H1 (cell line): ENCODE measurements at regions of chr1 and their contacts with region 1.

Region 1: DNA sequence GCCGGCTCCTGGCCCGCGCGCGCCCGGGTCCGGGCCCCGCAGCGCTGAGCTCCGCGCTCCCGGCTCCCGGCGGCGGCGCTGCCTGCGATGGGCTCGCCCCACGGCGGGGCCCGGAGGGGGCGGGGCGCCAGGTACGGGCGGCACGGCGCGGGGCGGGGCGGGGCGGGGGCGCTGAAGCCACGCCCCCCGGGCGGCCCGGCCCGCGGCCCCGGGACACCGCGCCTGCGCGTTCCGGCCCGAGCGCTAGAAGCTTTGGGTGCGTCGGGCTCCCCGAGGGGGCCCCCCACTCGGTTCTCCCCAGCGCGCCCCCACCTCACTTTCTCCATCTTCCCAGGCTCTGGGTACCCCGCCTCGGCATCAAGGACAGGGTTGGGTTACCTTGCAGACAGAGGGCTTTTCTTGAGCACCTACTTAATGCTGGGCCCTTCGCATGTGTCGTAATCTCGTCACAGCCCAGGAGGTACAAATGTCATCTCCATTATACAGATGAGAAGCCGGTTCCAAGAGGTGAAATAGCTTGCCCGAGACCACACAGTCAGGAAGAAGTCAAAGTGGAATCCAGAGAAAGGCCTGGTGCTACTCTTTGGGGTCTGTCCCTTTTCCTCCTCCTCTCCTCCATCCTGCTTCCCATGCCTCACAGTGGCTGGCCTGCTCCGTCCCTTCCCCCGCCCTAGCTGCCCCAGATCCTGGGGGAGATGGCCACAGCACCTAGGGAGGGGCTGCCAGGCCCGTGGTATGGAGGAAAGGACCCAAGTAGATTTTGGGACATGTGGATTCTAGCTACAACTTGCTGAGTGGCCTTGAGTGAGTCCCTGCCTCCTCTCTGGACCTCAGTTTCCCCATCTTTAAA is 46.5 kb downstream of the RAP1GAP start:
- DNase-seq: peak in 1 of 2 experiments; percentile 81
- H3K4me3 ChIP-seq: peak overlapping the region; percentile 24 to 60 (median 32)
- H3K27ac ChIP-seq: no peak overlapping the region
- H3K4me1 ChIP-seq: peaks cover 0 to 23% (median 17%) of the 10 kb centered on the region in 4 experiments; a peak in 6 of 7 replicates
- H3K27me3 ChIP-seq: peaks cover 0 to 26% (median 13%) of the 10 kb centered on the region in 4 experiments; a peak in 5 of 7 replicates
- CTCF ChIP-seq: no peak
- EP300 ChIP-seq: no peak
- POLR2A ChIP-seq: no peak
- RAD21 ChIP-seq: no peak

Region 2: DNA sequence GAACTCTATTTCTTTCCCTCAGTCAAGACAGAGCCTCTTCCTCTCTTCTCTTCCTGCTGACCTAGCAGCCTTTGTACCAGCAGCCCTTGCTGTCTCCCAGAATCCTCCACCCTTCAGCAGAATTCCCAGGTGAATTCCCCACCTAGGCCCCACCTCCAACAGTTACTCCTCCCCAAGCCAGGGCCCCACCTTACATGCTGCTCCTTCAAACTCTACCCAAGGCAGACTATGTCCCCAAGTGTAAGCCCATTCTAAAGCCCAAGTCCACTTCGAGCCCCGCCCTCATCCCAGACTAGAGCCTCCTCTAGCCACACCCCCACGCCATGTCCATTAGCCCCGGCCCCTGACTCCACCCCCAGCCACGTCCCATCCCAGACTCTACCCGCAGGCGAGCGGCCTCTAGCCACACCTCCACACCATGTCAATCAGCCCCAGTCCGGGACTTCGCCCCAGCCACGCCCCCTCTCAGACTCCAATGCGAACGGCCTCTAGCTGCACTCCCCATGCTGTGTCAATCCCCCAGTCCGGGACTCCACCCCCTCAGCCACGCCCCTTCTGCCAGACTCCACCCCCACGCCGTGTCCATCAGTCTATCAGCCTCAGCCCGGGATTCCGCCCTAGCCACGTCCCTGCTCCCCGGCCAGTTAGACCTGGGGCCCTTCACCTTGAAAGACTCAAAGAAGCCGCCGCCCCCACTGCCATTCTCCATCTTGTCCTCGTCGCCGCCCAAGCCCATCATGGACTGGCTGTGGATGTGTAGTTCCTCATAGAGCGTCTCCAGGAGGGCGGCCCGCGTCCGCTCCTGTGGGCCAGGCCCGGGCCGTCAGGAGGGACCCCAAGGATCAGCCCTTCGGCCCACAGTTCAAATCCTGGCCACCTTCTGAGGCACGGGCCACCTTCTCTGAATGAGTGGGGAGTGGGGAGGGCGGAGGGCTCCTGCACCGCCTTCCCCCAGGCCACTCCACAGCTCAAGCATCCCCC is 14.9 kb before region 1 on chr1:
- CTCF ChIA-PET with region 1: interaction called, 7 read pairs
- POLR2A ChIA-PET with region 1: interaction called, 14 read pairs
- DNase-seq: peak; percentile 100
- H3K4me3 ChIP-seq: peak overlapping the region in 1 of 4 experiments; percentile 40; a peak in 2 of 8 replicates
- H3K27ac ChIP-seq: no peak overlapping the region
- H3K4me1 ChIP-seq: peaks cover 2 to 7% (median 3%) of the 10 kb centered on the region in 4 experiments; a peak in 6 of 7 replicates
- H3K27me3 ChIP-seq: no peaks in the 10 kb centered on the region
- CTCF ChIP-seq: no peak
- EP300 ChIP-seq: no peak
- POLR2A ChIP-seq: no peak
- RAD21 ChIP-seq: no peak

Region 3: GRCh38 chr1:21801100-21801499 is 178.4 kb after region 1 on chr1:
- CTCF ChIA-PET with region 1: no interaction called
- POLR2A ChIA-PET with region 1: no interaction called
- DNase-seq: no peak
- H3K4me3 ChIP-seq: no peak overlapping the region
- H3K27ac ChIP-seq: no peak overlapping the region
- H3K4me1 ChIP-seq: no peaks in the 10 kb centered on the region
- H3K27me3 ChIP-seq: no peaks in the 10 kb centered on the region
- CTCF ChIP-seq: no peak
- EP300 ChIP-seq: no peak
- POLR2A ChIP-seq: no peak
- RAD21 ChIP-seq: no peak